ENCODE measurements at regions of chr2 and their contacts with region 1.

Region 1: GRCh38 chr2:44244129-44244871 is 31.0 kb upstream of the SLC3A1 start:
- DNase-seq: peak; percentile 41 to 67
- H3K4me3 ChIP-seq: peak overlapping the region; percentile 33; the same call in 1 of the 2 replicates
- H3K27ac ChIP-seq: no peak overlapping the region
- H3K4me1 ChIP-seq: peaks cover 17% of the 10 kb centered on the region
- H3K27me3 ChIP-seq: no peaks in the 10 kb centered on the region
- CTCF ChIP-seq: peak; percentile 87

Region 2: GRCh38 chr2:44087036-44087713 is 157.1 kb before region 1 on chr2:
- CTCF ChIA-PET with region 1: no interaction called
- POLR2A ChIA-PET with region 1: no interaction called
- intact Hi-C with region 1: loop called (anchors 2 kb)
- DNase-seq: peak; percentile 66 to 87
- H3K4me3 ChIP-seq: peak overlapping the region; percentile 42; the same call in 1 of the 2 replicates
- H3K27ac ChIP-seq: no peak overlapping the region
- H3K4me1 ChIP-seq: peaks cover 10% of the 10 kb centered on the region; the same call in 1 of the 2 replicates
- H3K27me3 ChIP-seq: no peaks in the 10 kb centered on the region
- CTCF ChIP-seq: peak; percentile 99

Region 3: GRCh38 chr2:44201648-44202165 is 42.6 kb before region 1 on chr2:
- CTCF ChIA-PET with region 1: no interaction called
- POLR2A ChIA-PET with region 1: no interaction called
- intact Hi-C with region 1: no loop called
- DNase-seq: no peak
- H3K4me3 ChIP-seq: no peak overlapping the region
- H3K27ac ChIP-seq: no peak overlapping the region
- H3K4me1 ChIP-seq: no peaks in the 10 kb centered on the region
- H3K27me3 ChIP-seq: no peaks in the 10 kb centered on the region
- CTCF ChIP-seq: no peak

Region 4: GRCh38 chr2:44291281-44292248 is 47.3 kb after region 1 on chr2:
- CTCF ChIA-PET with region 1: interaction called, 5 read pairs
- POLR2A ChIA-PET with region 1: no interaction called
- intact Hi-C with region 1: loop called (anchors 1 kb)
- DNase-seq: peak; percentile 71 to 97
- H3K4me3 ChIP-seq: peak overlapping the region; percentile 5; the same call in 1 of the 2 replicates
- H3K27ac ChIP-seq: peak overlapping the region; percentile 49
- H3K4me1 ChIP-seq: peaks cover 30% of the 10 kb centered on the region
- H3K27me3 ChIP-seq: no peaks in the 10 kb centered on the region
- CTCF ChIP-seq: peak; percentile 76

Region 5: DNA sequence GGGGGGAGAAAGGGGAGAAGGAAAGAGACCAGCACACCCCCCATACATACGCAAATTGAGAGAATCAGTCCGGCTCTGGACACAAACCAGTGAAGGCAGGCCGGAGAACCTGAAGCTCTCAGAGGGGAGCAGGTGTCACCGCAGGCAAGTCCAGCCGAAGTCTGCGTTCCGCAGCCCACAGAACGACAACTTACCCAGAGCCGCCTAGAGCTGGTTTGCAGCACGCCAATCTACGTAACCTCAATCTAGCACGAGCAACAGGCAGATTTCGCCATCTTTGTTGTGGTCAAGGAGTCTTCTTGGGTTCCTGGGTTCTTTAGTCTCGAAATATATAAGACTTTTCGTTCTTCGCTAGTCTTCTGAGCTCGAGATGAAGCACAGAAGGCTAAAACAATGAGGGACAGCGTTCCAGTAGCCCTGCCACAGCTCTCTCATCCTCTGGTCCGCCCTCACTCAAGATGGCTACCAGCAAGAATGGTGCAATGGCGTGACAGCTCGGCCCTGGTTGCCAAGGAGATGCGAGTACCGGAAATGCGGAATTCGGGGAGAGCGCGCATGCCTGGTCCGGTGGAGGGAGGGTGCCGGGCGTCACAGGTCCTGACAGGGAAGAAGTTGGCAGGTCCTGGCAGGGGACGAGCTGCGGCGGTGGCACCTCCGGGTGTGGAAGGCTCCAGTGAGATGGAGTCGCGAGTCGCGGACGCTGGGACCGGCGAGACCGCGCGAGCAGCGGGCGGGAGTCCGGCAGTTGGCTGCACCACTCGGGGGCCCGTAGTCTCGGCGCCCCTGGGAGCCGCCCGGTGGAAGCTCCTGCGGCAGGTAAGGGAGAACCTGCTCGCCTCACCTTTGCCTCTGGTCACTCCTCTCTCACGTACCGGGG is 117.3 kb after region 1 on chr2 and contains the starts of genes CAMKMT and PREPL:
- CTCF ChIA-PET with region 1: interaction called, 17 read pairs
- POLR2A ChIA-PET with region 1: no interaction called
- intact Hi-C with region 1: no loop called
- DNase-seq: peak; percentile 95 to 98
- H3K4me3 ChIP-seq: peak within 1 kb of the TSS; percentile 67
- H3K27ac ChIP-seq: peak within 1 kb of the TSS; percentile 88
- H3K4me1 ChIP-seq: peaks cover 32% of the 10 kb centered on the region
- H3K27me3 ChIP-seq: no peaks in the 10 kb centered on the region
- CTCF ChIP-seq: no peak
- total RNA-seq, gene CAMKMT: 11.7 and 17.9 TPM in 2 replicates
- total RNA-seq, gene PREPL: 34.2 and 42.2 TPM in 2 replicates

Region 6: DNA sequence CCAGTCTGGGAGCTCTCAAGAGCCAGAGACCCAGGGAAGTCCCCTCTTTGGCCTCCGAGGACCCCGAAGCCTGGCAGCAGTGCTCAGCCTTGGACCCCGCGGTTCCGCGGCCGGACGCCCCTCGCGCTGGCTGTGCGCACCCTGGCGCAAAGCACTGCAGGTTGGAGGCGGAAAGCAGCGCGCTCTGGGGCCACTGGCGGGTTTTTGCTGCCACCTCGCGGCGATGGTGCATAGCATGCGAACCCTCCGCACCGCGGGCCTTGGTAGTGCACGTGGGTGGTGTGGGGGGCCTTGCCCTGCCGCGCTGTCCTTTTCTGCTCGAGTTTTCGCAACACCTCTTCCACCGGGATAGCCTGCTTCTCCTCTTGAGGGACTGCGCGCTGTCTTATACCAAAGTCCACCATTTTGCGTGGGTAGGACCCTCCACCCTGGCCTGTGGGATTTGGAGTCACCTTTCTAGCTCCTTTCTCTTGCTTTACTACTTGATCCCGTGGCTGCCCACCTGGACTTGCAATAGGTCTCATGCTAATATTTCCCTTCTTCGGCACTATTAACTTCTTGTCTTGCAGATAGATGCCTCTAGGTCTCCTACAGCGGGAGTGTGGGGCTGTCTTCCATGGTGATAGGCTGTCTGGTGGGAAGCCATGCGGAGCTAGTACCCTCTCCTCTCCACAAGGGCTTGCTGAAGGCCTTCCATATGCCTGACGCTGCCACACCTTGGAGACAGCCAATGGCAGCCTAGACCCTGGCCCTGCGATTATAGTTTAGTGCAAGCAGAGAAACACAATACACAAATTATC is 711.5 kb after region 1 on chr2:
- CTCF ChIA-PET with region 1: interaction called, 3 read pairs
- POLR2A ChIA-PET with region 1: no interaction called
- intact Hi-C with region 1: loop called (anchors 5 kb)
- DNase-seq: peak; percentile 58 to 83
- H3K4me3 ChIP-seq: peak overlapping the region; percentile 49; the same call in 1 of the 2 replicates
- H3K27ac ChIP-seq: no peak overlapping the region
- H3K4me1 ChIP-seq: peaks cover 10% of the 10 kb centered on the region
- H3K27me3 ChIP-seq: no peaks in the 10 kb centered on the region
- CTCF ChIP-seq: peak; percentile 91